ENCODE measurements at regions of chr5 and their contacts with region 1.

Region 1: DNA sequence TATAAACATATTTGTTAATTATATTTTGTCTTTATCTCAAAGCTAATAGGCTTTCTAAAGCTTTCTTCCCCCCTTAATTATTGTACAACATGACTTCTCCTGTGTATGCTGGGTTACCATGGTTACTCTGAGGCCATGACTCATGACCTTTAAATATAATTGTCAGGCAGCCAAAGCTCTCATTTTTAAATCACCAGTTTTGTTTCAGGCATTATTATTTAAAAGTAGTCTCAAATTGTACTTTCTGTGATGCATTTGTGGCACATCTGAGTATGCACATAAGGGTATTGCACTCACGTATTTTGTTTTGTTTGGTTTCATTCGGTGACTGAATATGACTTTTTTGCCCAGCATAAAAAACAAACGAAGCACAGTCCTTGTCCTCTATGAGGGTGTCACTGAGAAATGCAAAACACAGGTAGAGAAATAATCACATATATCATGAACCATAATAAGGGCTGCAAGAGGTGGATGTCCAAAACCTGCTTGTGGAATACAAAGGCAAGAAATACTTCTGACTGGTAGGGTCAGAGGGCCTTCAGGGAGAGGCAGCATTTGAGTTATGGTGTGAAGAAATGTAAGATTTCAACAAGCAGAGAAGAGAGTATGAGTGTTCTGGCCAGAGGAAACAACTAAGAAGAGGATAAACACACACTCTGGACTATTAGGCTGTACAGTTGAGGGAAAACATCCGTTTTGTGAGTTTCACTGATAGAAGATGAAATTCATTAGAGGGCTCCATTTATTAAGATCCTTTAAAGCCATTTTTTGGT is 2.1 kb downstream of the CCDC192 start:
- DNase-seq: no peak
- H3K4me3 ChIP-seq: no peak overlapping the region
- H3K27ac ChIP-seq: no peak overlapping the region
- H3K4me1 ChIP-seq: no peaks in the 10 kb centered on the region
- H3K27me3 ChIP-seq: no peaks in the 10 kb centered on the region
- CTCF ChIP-seq: no peak
- POLR2A ChIP-seq: no peak

Region 2: GRCh38 chr5:127666043-127666716 is 39.1 kb before region 1 on chr5:
- intact Hi-C with region 1: loop called (anchors 5 kb)
- DNase-seq: no peak
- H3K4me3 ChIP-seq: no peak overlapping the region
- H3K27ac ChIP-seq: no peak overlapping the region
- H3K4me1 ChIP-seq: no peaks in the 10 kb centered on the region
- H3K27me3 ChIP-seq: no peaks in the 10 kb centered on the region
- CTCF ChIP-seq: no peak
- POLR2A ChIP-seq: no peak

Measured in prostate gland (tissue), 2 donors.